Psoas muscle (tissue), 8 donors: ENCODE measurements at regions of chr2 and their contacts with region 1.

Region 1: GRCh38 chr2:26355038-26355995 is 8.7 kb upstream of the ADGRF3 start:
- DNase-seq: no peak
- ATAC-seq: peak; percentile 87 to 91 (median 90)
- H3K4me3 ChIP-seq: peak overlapping the region; percentile 29
- H3K27ac ChIP-seq: peak overlapping the region; percentile 80
- H3K4me1 ChIP-seq: peaks cover 47% of the 10 kb centered on the region
- H3K27me3 ChIP-seq: no peaks in the 10 kb centered on the region
- CTCF ChIP-seq: no peak

Region 2: GRCh38 chr2:26412091-26412673 is 56.9 kb after region 1 on chr2:
- intact Hi-C with region 1: no loop called
- DNase-seq: no peak
- ATAC-seq: no peak
- H3K4me3 ChIP-seq: no peak overlapping the region
- H3K27ac ChIP-seq: no peak overlapping the region
- H3K4me1 ChIP-seq: no peaks in the 10 kb centered on the region
- H3K27me3 ChIP-seq: peaks cover 0 to 3% (median 0%) of the 10 kb centered on the region in 3 donors
- CTCF ChIP-seq: no peak

Region 3: DNA sequence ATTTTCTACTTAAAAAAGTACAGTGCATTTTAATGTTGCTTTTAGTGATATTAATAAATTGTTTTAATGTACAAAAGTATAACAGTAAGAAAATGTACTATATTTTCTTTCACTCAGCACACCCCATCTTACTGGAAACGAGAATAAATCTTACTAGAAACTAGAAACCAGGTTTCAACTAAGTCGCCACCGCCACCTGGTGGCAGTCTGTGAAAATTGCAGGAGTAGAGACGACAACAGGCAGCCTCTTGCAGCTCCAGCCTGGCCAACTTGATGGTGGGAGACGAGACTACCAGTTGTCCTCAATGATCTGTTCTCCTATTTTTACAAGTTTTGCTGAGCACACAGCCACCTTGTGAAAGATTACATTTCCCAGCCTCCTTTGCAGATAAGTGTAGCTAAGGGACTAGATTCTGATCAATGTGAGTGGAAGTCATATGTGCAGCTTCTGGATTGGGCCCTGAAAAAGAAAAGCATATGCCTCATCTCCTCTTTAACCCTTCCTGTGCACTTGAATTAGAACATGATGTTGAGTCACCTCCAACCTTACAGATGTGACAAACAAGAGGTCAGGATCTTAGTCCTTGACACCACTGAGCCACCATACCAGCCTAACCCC is 113.9 kb after region 1 on chr2:
- intact Hi-C with region 1: loop called in 1 of 2 experiments (anchors 10 kb)
- DNase-seq: peak in 1 of 2 donors; percentile 52
- ATAC-seq: no peak
- H3K4me3 ChIP-seq: no peak overlapping the region
- H3K27ac ChIP-seq: no peak overlapping the region
- H3K4me1 ChIP-seq: no peaks in the 10 kb centered on the region
- H3K27me3 ChIP-seq: no peaks in the 10 kb centered on the region
- CTCF ChIP-seq: peak; percentile 44